ENCODE measurements at regions of chr17 and their contacts with region 1.

Region 1: GRCh38 chr17:75749545-75750389 is 15.2 kb downstream of the GALK1 start:
- DNase-seq: peak; percentile 89
- CTCF ChIP-seq: peak; percentile 88

Region 2: GRCh38 chr17:75619506-75620431 is 130.0 kb before region 1 on chr17:
- in situ Hi-C with region 1: loop called (anchors 10 kb)
- DNase-seq: peak; percentile 64
- CTCF ChIP-seq: no peak

Region 3: DNA sequence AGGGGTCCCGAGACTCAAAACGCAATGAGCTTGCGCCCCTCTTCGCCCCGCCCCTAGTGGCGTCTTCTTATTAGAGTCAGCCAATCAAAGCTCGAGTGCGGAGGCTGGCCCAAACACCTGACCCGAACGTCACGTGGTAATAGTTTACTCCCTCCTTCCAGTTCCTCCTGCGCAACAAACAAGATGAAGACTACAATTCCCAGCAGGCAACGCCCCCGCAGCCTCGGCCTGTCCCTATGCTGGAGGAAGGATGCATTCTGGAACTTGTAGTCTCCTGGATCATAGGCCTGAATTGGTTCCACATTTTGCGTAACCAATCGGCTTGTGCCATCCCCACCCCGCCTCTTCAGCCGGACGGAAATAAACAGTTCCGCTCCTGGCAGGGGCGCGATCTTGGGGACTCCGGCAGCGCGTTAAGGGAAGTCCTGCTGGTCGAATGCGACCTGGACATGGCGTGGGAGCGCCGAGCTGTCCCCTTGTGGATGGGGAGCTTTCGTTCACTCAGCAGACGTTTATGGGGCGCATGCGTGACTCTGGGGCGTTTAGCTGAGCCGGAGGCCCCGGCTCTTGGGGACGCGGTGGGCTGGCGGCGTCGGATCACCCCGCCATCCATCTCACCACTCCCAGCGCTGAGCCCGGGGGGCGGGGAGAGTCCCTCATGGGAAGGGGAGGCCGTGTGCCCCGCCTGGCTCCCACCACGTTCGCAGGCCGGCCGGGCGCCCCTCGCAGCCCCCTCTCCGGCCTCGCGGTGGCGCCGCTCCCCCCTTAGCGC is 105.7 kb after region 1 on chr17 and contains the start of gene WBP2:
- in situ Hi-C with region 1: no loop called
- DNase-seq: peak; percentile 97
- CTCF ChIP-seq: peak; percentile 68